Esophagus muscularis mucosa (tissue), 4 donors: ENCODE measurements at regions of chr20 and their contacts with region 1.

Region 1: DNA sequence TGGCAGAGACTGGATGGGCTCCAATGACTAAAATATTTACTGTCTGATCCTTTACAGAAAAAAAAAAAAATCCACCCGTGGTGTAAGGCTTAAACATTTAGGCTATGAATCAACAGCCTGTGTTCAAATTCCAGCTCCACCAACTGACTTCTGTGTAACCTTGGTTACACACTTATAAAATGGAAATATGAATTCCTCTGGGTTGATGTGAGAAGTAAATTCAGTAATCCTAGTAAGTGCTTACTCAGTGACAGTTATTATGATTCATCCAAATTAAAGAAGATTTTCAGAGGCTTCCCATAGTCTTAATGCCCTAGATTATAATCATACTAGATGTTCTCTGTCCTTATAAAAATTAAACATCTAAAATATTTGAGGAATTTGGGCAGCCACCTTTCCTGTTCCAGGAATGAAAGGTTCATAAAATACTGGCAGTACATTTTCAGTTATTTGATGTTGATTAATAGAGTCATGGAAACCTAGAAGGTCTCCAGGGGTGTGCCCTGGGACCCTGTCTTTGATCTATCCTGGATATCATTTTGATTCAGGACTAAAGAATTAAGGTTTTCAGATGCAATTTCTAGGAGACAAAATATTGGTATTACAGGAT is 180.3 kb upstream of the ZNF217 start:
- DNase-seq: no peak
- H3K4me3 ChIP-seq: no peak overlapping the region
- H3K27ac ChIP-seq: peak overlapping the region; percentile 52 to 71 (median 62)
- H3K4me1 ChIP-seq: peaks cover 16 to 32% (median 24%) of the 10 kb centered on the region in 4 donors
- H3K27me3 ChIP-seq: no peaks in the 10 kb centered on the region
- CTCF ChIP-seq: no peak
- EP300 ChIP-seq: no peak
- POLR2A ChIP-seq: no peak

Region 2: GRCh38 chr20:53513301-53514298 is 260.3 kb before region 1 on chr20:
- intact Hi-C with region 1: no loop called
- DNase-seq: no peak
- H3K4me3 ChIP-seq: no peak overlapping the region
- H3K27ac ChIP-seq: no peak overlapping the region
- H3K4me1 ChIP-seq: no peaks in the 10 kb centered on the region
- H3K27me3 ChIP-seq: peaks cover 0 to 3% (median 0%) of the 10 kb centered on the region in 4 donors
- CTCF ChIP-seq: no peak
- EP300 ChIP-seq: no peak
- POLR2A ChIP-seq: no peak

Region 3: DNA sequence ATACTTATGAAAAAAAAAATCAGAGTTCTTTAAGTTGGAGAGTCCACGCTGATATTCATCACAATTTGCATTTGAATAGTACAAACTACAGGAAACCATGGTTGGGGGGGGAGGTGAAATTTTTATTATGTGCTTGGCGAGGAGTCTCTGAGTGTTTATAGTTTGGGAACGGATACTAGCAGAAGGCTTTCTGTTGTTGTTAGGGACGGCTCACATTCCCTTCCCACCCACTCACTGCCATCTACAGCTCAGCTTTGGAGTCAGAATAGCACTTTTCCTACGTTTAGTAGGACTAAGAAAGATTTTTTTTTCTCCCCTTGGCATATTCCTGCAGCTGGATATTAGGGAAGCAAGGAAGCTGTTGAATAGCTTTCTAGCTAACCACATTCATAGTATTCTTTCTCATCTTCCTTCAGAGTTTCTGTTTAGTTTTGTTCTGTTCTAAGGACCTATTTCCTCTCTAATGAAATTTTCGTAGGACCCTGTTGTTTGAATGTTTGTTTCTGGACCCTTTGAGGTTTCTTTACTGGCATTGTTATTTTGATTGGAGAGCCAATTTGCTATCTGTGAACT is 54.9 kb after region 1 on chr20:
- intact Hi-C with region 1: loop called (anchors 5 kb)
- DNase-seq: no peak
- H3K4me3 ChIP-seq: peak overlapping the region; percentile 23 to 47 (median 38)
- H3K27ac ChIP-seq: peak overlapping the region; percentile 71 to 84 (median 76)
- H3K4me1 ChIP-seq: peaks cover 20 to 39% (median 36%) of the 10 kb centered on the region in 4 donors
- H3K27me3 ChIP-seq: no peaks in the 10 kb centered on the region
- CTCF ChIP-seq: no peak
- EP300 ChIP-seq: no peak
- POLR2A ChIP-seq: no peak

Region 4: DNA sequence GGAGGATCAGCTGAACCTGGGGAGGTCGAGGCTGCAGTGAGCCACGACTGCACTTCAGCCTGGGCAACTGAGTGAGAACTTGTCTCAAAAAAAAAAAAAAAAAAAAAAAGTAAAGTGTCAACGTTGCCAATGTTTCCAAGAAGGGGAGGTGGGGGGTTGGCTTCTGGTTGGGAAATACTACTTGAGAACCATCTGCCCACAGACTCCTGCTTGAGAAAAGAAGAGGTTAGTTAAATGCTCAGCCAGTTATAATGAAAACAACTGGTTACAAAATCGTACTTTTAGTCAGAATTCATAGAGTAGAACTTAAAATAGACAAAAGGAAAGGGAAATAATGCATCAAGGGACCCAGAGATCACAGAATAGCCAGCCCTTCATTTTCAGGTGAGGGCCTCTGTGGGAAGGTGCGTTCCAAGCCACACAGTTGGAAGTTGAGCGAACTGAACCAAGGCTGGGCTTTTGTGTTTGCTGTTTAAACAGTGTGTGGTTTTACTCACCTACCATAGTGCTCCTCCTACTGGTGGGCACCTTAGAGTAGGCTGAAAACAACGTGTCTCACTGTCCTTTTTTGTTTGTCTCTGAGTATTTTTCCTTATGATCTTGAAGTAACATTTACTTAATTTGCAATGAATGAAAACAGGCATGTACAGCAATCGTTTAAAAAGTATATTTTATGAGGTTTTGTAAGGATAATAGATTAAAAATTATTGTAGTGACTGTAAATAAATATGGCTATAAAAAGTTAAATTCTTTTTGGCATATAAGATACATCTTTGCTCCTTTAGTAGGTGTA is 95.8 kb after region 1 on chr20:
- intact Hi-C with region 1: loop called (anchors 5 kb)
- DNase-seq: no peak
- H3K4me3 ChIP-seq: no peak overlapping the region
- H3K27ac ChIP-seq: peak overlapping the region; percentile 32 to 62 (median 44)
- H3K4me1 ChIP-seq: peaks cover 33 to 58% (median 50%) of the 10 kb centered on the region in 4 donors
- H3K27me3 ChIP-seq: no peaks in the 10 kb centered on the region
- CTCF ChIP-seq: peak; percentile 77 to 84 (median 79)
- EP300 ChIP-seq: no peak
- POLR2A ChIP-seq: no peak